ENCODE measurements at regions of chr1 and their contacts with region 1.

Region 1: GRCh38 chr1:13543451-13544220 is 29.8 kb upstream of the LRRC38 start:
- DNase-seq: peak; percentile 62 to 88 (median 68)
- ATAC-seq: peak; percentile 70 to 80 (median 74)
- H3K4me3 ChIP-seq: no peak overlapping the region
- H3K27ac ChIP-seq: peak overlapping the region; percentile 49 to 95 (median 76)
- H3K4me1 ChIP-seq: peaks cover 0 to 24% (median 0%) of the 10 kb centered on the region in 12 donors
- H3K27me3 ChIP-seq: no peaks in the 10 kb centered on the region
- CTCF ChIP-seq: peak; percentile 28 to 70 (median 54)
- POLR2A ChIP-seq: no peak

Region 2: DNA sequence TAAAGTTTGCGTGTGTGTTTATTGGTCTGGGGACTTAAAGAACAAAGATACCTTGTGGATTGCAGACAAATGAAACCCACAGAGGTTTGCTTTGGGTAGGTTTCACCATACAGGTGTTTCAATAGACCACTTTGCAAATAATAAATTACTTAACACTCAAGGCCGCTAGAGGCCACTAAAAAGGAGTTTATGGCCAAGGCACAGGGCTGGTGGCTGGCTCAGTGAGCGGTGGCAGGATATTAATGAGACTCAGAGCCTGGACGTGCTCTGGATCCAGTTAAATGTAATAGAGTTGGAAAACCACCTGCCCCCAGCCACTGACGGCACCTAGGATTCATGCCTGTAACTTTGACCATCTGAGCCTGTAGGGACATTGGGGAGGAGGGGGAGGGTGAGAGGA is 74.3 kb before region 1 on chr1:
- intact Hi-C with region 1: loop called in 7 of 10 experiments (anchors 1 to 10 kb)
- DNase-seq: peak in 4 of 5 donors; percentile 7 to 45 (median 26)
- ATAC-seq: peak in 3 of 4 donors; percentile 60 to 77 (median 66)
- H3K4me3 ChIP-seq: no peak overlapping the region
- H3K27ac ChIP-seq: no peak overlapping the region
- H3K4me1 ChIP-seq: no peaks in the 10 kb centered on the region
- H3K27me3 ChIP-seq: no peaks in the 10 kb centered on the region
- CTCF ChIP-seq: peak in 9 of 12 donors; percentile 18 to 43 (median 28)
- POLR2A ChIP-seq: no peak

Region 3: DNA sequence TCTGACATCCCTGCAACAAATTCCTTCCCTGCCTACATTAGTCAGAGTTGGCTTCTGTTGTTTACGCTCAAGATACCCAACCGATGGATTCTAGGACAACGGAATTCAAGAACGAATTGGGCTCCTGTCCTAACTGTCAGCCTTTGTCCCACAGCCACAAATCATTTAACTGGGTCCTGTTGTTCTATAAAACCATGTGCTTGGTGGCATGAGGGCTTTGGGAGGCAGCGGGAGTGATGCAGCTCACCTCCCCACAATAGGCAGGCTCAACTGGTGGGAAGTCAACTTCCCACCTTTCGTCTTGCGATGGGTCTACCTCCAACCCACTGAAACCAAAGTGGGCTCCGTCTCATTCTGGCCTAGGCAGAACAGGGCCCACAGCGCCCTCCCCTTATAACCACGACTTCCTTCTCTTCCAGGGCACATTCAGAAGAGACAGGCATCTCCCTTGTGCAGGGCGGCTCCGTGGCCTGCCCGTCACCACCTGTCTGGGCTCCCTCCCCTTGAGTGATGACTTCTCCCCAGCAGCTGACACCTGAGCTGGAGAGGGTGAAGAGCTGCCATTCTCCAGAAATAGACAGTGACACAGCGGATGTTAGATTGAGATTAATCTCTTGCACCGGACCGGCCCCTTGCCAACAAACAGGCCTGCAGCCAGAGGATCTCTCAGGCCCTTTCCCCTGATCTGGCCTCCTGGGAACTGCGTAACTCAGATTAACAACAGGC is 56.3 kb before region 1 on chr1:
- intact Hi-C with region 1: loop called in 2 of 10 experiments (anchors 5 kb)
- DNase-seq: peak; percentile 59 to 85 (median 76)
- ATAC-seq: peak; percentile 78 to 95 (median 88)
- H3K4me3 ChIP-seq: no peak overlapping the region
- H3K27ac ChIP-seq: peak overlapping the region in 6 of 12 donors; percentile 20 to 69 (median 50)
- H3K4me1 ChIP-seq: peaks cover 0 to 6% (median 0%) of the 10 kb centered on the region in 12 donors
- H3K27me3 ChIP-seq: no peaks in the 10 kb centered on the region
- CTCF ChIP-seq: no peak
- POLR2A ChIP-seq: no peak

Region 4: GRCh38 chr1:13605159-13605558 is 61.5 kb after region 1 on chr1:
- intact Hi-C with region 1: loop called in 2 of 10 experiments (anchors 1 to 2 kb)
- DNase-seq: no peak
- ATAC-seq: no peak
- H3K4me3 ChIP-seq: no peak overlapping the region
- H3K27ac ChIP-seq: no peak overlapping the region
- H3K4me1 ChIP-seq: peaks cover 0 to 11% (median 0%) of the 10 kb centered on the region in 12 donors
- H3K27me3 ChIP-seq: no peaks in the 10 kb centered on the region
- CTCF ChIP-seq: no peak
- POLR2A ChIP-seq: no peak

Measured in heart left ventricle (tissue), 16 donors.